IMR-90 (cell line): ENCODE measurements at regions of chr17 and their contacts with region 1.

Region 1: GRCh38 chr17:68377862-68378770 is 79.2 kb downstream of the WIPI1 start:
- DNase-seq: peak; percentile 94
- ATAC-seq: peak; percentile 79
- H3K4me3 ChIP-seq: no peak overlapping the region
- H3K27ac ChIP-seq: peak overlapping the region; percentile 93
- H3K4me1 ChIP-seq: peaks cover 23% of the 10 kb centered on the region
- H3K27me3 ChIP-seq: no peaks in the 10 kb centered on the region
- CTCF ChIP-seq: no peak
- POLR2A ChIP-seq: peak; percentile 63
- RAD21 ChIP-seq: peak; percentile 9

Region 2: GRCh38 chr17:68291844-68292695 is 86.0 kb before region 1 on chr17:
- CTCF ChIA-PET with region 1: no interaction called
- POLR2A ChIA-PET with region 1: no interaction called
- dilution Hi-C with region 1: no loop called
- in situ Hi-C with region 1: no loop called
- intact Hi-C with region 1: loop called (anchors 5 kb)
- DNase-seq: peak; percentile 68
- ATAC-seq: peak; percentile 88
- H3K4me3 ChIP-seq: peak overlapping the region; percentile 85
- H3K27ac ChIP-seq: no peak overlapping the region; the same call in 1 of the 2 replicates
- H3K4me1 ChIP-seq: peaks cover 5% of the 10 kb centered on the region
- H3K27me3 ChIP-seq: peaks cover 22% of the 10 kb centered on the region
- CTCF ChIP-seq: 0 out of 2 replicates have a peak, but pooled peaks have one; percentile 14
- POLR2A ChIP-seq: peak; percentile 30; the same call in 1 of the 2 replicates
- RAD21 ChIP-seq: no peak

Region 3: DNA sequence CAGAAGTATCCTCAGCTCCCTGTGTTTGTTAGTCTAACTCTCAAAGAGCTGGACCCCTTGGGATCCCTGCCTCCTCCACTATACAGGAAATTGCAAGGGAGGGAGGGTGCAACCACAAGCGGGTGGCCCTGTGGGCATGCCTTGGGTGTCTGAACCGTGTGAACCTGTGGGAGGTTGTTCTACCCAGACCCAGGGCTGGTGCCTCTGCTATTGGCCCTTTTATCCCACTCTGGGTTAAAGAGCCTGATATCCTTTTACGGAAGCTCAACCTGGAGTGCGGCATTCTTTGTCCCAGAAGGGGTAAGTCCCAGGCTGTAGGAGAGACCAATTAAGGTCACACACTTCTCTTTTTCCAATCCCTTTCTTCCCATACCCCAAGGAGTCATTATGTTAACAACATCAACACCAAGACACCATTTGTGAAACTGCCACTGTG is 33.4 kb before region 1 on chr17:
- CTCF ChIA-PET with region 1: no interaction called
- POLR2A ChIA-PET with region 1: interaction called, 11 read pairs
- dilution Hi-C with region 1: no loop called
- in situ Hi-C with region 1: no loop called
- intact Hi-C with region 1: no loop called
- DNase-seq: no peak
- ATAC-seq: no peak
- H3K4me3 ChIP-seq: no peak overlapping the region
- H3K27ac ChIP-seq: no peak overlapping the region
- H3K4me1 ChIP-seq: no peaks in the 10 kb centered on the region
- H3K27me3 ChIP-seq: no peaks in the 10 kb centered on the region
- CTCF ChIP-seq: no peak
- POLR2A ChIP-seq: no peak
- RAD21 ChIP-seq: no peak

Region 4: DNA sequence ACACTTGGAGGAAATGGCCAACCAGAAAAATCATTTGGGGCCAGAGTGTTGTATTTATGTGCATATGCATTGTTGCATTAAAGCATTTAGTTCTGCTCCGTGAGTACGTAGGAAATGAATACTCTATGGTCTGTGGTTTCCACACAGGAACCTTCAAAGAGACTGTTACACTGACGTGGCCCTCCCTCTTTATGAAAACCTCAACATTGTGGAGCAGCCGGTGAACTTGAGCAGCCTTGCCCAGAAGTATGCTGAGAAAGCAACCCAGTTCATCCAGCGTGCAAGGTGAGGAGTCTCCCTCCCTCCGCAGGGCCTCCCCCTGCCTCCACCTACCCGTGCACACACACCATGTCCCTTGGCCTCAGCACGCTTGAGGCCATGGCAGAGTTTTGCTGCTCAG is 21.6 kb before region 1 on chr17:
- CTCF ChIA-PET with region 1: no interaction called
- POLR2A ChIA-PET with region 1: no interaction called
- dilution Hi-C with region 1: no loop called
- in situ Hi-C with region 1: no loop called
- intact Hi-C with region 1: loop called (anchors 2 kb)
- DNase-seq: no peak
- ATAC-seq: no peak
- H3K4me3 ChIP-seq: no peak overlapping the region
- H3K27ac ChIP-seq: no peak overlapping the region
- H3K4me1 ChIP-seq: peaks cover 10% of the 10 kb centered on the region
- H3K27me3 ChIP-seq: no peaks in the 10 kb centered on the region
- CTCF ChIP-seq: no peak
- POLR2A ChIP-seq: no peak
- RAD21 ChIP-seq: no peak

Region 5: DNA sequence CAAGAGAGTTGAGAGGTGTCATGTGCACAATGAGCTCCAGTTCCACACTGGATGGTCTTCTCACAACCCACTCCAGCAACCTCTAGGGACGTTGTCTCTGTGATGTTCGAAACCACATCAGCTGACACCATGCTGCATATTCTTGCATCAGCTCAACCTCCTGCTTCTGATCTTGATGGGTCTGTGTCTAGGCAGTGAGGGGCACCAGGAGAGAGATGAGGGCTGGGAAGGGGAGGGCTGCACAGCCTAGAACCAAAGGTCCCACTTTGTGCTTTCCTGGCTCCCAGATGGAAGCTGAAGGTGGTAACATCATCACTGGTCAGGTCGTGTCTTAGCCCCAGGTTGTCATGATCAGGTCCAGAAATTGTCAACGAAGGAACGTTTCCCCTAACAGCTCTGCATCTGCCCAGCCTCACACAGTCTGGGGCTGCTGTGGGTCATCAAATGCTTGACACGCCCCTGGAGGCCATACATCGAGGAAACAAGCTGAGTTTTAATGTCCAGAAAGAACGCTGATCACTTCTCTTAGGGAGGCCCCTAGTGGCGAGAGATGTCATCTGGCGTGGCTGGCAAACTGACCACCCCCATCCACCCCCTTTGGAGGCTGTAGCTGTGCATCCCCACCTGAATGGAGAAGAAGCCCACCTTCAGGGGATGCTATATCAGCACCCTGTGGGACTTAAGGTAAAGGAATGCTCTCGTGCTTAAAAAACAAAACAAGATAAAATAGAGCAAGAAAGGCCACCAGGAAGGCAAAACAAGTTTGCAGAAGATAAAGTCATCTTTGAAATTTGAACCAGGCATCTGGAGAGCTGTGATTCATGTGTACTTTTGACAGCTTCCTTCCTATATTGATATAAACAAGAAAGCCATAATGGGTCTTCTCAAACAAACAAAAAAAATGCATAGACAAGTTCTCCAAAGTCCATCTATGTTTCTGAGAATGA is 20.8 kb after region 1 on chr17:
- CTCF ChIA-PET with region 1: interaction called, 24 read pairs
- POLR2A ChIA-PET with region 1: interaction called, 8 read pairs
- dilution Hi-C with region 1: no loop called
- in situ Hi-C with region 1: no loop called
- intact Hi-C with region 1: no loop called
- DNase-seq: peak; percentile 81
- ATAC-seq: peak; percentile 95
- H3K4me3 ChIP-seq: no peak overlapping the region
- H3K27ac ChIP-seq: 0 out of 2 replicates have a peak overlapping the region, but pooled peaks have one; percentile 0
- H3K4me1 ChIP-seq: peaks cover 4% of the 10 kb centered on the region
- H3K27me3 ChIP-seq: no peaks in the 10 kb centered on the region
- CTCF ChIP-seq: peak; percentile 90
- POLR2A ChIP-seq: no peak
- RAD21 ChIP-seq: peak; percentile 89

Region 6: GRCh38 chr17:68457539-68458259 is 79.6 kb after region 1 on chr17:
- CTCF ChIA-PET with region 1: no interaction called
- POLR2A ChIA-PET with region 1: no interaction called
- dilution Hi-C with region 1: no loop called
- in situ Hi-C with region 1: no loop called
- intact Hi-C with region 1: loop called (anchors 5 kb)
- DNase-seq: peak; percentile 98
- ATAC-seq: peak; percentile 93
- H3K4me3 ChIP-seq: peak overlapping the region; percentile 65
- H3K27ac ChIP-seq: no peak overlapping the region
- H3K4me1 ChIP-seq: peaks cover 2% of the 10 kb centered on the region; the same call in 1 of the 2 replicates
- H3K27me3 ChIP-seq: peaks cover 2% of the 10 kb centered on the region; the same call in 1 of the 2 replicates
- CTCF ChIP-seq: no peak
- POLR2A ChIP-seq: no peak
- RAD21 ChIP-seq: no peak

Region 7: GRCh38 chr17:68697850-68698361 is 319.8 kb after region 1 on chr17:
- CTCF ChIA-PET with region 1: no interaction called
- POLR2A ChIA-PET with region 1: no interaction called
- dilution Hi-C with region 1: no loop called
- in situ Hi-C with region 1: no loop called
- intact Hi-C with region 1: no loop called
- DNase-seq: peak; percentile 68
- ATAC-seq: peak; percentile 82
- H3K4me3 ChIP-seq: no peak overlapping the region
- H3K27ac ChIP-seq: peak overlapping the region; percentile 90; the same call in 1 of the 2 replicates
- H3K4me1 ChIP-seq: peaks cover 9% of the 10 kb centered on the region; the same call in 1 of the 2 replicates
- H3K27me3 ChIP-seq: no peaks in the 10 kb centered on the region
- CTCF ChIP-seq: no peak
- POLR2A ChIP-seq: no peak
- RAD21 ChIP-seq: no peak